ENCODE measurements at regions of chr4 and their contacts with region 1.

Region 1: GRCh38 chr4:68175562-68176155 is 46.0 kb upstream of the TMPRSS11F start:
- DNase-seq: peak; percentile 25
- ATAC-seq: 0 out of 2 replicates have a peak, but pooled peaks have one; percentile 65
- H3K4me3 ChIP-seq: no peak overlapping the region
- H3K27ac ChIP-seq: no peak overlapping the region
- H3K4me1 ChIP-seq: no peaks in the 10 kb centered on the region
- H3K27me3 ChIP-seq: no peaks in the 10 kb centered on the region
- CTCF ChIP-seq: peak; percentile 56; the same call in 1 of the 2 replicates

Region 2: DNA sequence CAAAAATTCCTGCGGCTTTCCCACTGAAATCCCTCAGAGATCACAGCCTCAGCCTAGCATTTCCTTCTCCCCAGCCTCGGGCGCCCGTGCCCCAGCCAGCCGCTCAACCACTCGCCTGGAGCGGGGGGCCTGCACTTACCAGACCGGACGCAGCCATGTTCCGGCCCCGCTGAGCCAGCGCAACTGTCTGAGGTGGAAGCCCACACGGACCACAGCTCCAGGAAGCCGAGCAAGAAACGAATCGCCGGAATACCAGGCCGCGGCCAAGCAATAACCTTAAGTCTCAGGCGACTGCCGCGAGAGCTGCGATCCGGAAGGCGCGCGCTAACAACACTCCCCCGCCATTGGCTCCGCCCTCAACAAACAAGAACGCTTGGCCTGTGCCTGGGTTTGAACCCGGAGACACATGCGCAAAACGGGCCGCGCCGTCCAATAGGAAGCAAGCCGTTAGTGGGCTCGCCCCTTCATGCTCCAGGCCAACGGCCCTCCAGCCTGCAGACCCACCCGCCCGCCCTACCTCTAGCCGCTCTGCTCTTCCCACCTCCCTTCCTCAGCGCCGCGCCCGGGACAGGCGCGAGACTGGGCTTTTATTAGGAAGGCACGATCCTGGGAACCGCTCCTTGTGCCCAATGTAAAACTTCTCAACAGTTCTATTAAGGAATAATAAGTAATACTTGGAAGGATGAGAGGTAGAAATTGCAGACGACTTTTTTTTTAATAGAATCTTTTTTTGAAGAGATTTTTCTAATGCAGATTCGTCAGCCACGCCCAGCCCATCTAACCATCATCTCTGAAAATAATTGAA is 630.3 kb before region 1 on chr4 and contains the start of gene CENPC:
- CTCF ChIA-PET with region 1: no interaction called
- POLR2A ChIA-PET with region 1: no interaction called
- in situ Hi-C with region 1: no loop called
- intact Hi-C with region 1: loop called (anchors 5 kb)
- DNase-seq: peak; percentile 72
- ATAC-seq: peak; percentile 100
- H3K4me3 ChIP-seq: peak within 1 kb of the TSS; percentile 92 to 95
- H3K27ac ChIP-seq: peak within 1 kb of the TSS; percentile 91
- H3K4me1 ChIP-seq: peaks cover 3% of the 10 kb centered on the region; the same call in 1 of the 2 replicates
- H3K27me3 ChIP-seq: no peaks in the 10 kb centered on the region
- CTCF ChIP-seq: no peak
- total RNA-seq, gene CENPC: 10.1 TPM

Region 3: GRCh38 chr4:67871867-67872266 is 303.8 kb before region 1 on chr4:
- CTCF ChIA-PET with region 1: no interaction called
- POLR2A ChIA-PET with region 1: no interaction called
- in situ Hi-C with region 1: no loop called
- intact Hi-C with region 1: loop called (anchors 5 kb)
- DNase-seq: peak; percentile 27
- ATAC-seq: peak; percentile 73; the same call in 1 of the 2 replicates
- H3K4me3 ChIP-seq: no peak overlapping the region
- H3K27ac ChIP-seq: no peak overlapping the region
- H3K4me1 ChIP-seq: no peaks in the 10 kb centered on the region
- H3K27me3 ChIP-seq: no peaks in the 10 kb centered on the region
- CTCF ChIP-seq: peak; percentile 41; the same call in 1 of the 2 replicates

Region 4: DNA sequence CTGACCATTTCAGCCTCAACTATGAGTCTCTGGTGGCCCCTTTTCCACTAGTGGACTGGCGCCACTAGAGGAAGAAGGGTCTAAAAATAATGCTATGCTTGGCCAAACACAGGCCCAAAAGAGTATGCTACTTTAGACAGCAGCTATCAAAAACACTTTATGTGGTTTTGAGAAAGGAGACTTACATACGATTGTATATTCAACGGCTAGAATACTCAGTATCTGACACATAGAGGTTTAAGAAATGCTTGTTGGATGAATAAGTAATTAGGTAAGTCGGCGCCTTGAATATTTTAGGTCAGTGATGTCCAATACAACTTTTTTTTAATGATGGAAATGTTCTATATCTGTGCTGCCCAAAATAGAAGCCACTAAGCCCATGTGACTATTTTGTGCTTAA is 186.7 kb before region 1 on chr4:
- CTCF ChIA-PET with region 1: no interaction called
- POLR2A ChIA-PET with region 1: no interaction called
- in situ Hi-C with region 1: no loop called
- intact Hi-C with region 1: loop called (anchors 2 kb)
- DNase-seq: no peak
- ATAC-seq: no peak
- H3K4me3 ChIP-seq: no peak overlapping the region
- H3K27ac ChIP-seq: no peak overlapping the region
- H3K4me1 ChIP-seq: no peaks in the 10 kb centered on the region
- H3K27me3 ChIP-seq: no peaks in the 10 kb centered on the region
- CTCF ChIP-seq: no peak

Measured in Panc1 (cell line).